PC-9 (cell line): ENCODE measurements at regions of chr9 and their contacts with region 1.

Region 1: DNA sequence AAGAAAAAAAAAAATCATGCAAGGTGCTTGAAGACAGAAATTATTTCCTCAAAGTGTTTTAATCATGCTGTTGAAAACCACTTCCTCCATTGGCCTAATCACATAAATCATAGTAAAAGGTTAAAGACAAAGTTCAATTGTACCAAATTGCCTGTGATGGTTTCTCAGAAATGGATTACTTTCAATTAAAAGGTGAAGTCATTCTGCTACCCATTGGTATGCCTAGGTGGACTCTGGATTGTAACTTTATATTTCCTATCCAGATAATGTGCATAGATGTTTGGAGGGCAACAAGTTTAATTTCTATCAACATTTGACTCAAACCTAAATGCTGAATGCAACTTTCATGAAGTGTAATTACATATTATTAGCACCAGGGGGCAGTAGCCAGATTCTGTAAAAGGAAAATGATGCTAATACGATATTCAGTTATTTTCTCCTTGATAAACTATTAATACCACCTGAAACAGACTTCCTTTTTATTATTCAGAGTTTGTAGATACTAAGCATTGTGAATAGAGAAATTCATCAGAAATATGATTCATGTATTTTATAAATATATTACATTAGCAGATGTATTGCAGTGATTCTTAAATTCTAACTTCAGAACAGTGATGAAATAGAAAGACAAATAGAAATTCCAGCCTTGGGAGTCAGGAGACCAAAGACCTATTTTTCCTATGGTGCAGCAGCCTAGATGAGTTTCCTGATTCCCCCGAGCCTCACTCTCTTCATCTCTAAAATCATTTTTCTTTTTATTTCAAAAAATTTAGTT is 148.2 kb downstream of the CAAP1 start:
- DNase-seq: no peak
- H3K4me3 ChIP-seq: no peak overlapping the region
- H3K27ac ChIP-seq: no peak overlapping the region
- H3K4me1 ChIP-seq: peaks cover 10% of the 10 kb centered on the region
- H3K27me3 ChIP-seq: no peaks in the 10 kb centered on the region
- CTCF ChIP-seq: peak; percentile 80

Region 2: GRCh38 chr9:26856413-26857032 is 112.1 kb after region 1 on chr9:
- CTCF ChIA-PET with region 1: no interaction called
- POLR2A ChIA-PET with region 1: no interaction called
- intact Hi-C with region 1: loop called (anchors 1 kb)
- DNase-seq: peak in 1 of 2 experiments; percentile 37
- H3K4me3 ChIP-seq: no peak overlapping the region
- H3K27ac ChIP-seq: no peak overlapping the region
- H3K4me1 ChIP-seq: no peaks in the 10 kb centered on the region
- H3K27me3 ChIP-seq: no peaks in the 10 kb centered on the region
- CTCF ChIP-seq: peak; percentile 67